CD4-positive, alpha-beta memory T cell (primary cell): ENCODE measurements at regions of chr19 and their contacts with region 1.

Region 1: DNA sequence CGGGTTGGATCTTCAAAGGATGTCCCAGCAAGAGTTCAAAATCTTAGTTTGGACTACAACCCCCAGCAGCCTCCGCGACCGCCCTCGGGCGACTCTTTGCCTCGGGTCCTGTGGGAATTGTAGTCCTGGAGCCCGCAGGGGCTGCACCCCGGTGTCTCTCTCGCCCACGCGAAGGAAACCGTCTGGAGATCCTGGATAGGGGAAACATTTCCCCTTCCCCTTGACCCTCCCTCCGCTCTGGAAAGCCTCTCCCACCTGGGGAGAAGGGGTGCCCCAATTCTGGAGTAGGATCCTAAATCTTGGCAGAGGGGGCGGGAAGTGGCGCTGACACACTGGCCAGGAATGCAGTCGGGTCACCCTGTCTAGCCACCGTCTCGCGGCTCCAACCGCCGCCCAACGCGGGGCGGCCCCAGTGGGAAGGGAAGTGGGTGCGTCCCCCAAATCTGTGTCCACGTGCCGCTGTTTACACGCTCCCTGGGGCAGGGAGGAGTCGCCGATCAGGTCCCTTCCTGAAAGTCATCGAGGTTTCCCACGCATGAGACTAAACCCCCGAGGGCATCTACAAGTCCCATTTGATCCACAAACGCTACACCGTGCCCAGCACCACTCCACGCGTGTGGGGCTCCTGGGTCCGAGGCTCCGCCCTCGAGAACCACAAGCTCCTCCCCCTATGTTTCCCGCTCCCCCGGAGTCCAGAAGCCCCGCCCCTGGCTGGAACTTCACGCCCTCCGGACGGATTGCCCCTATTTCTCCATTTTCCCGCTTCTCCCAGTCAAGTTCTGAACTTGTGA is 761 bp upstream of the PPP1R13L start:
- DNase-seq: peak; percentile 80 to 91 (median 82)
- H3K4me3 ChIP-seq: peak overlapping the region; percentile 91 to 94
- H3K4me3 Mint-ChIP-seq: peak overlapping the region; percentile 90 to 99 (median 97)
- H3K27ac ChIP-seq: peak overlapping the region; percentile 65
- H3K27ac Mint-ChIP-seq: peak overlapping the region; percentile 69 to 99 (median 96)
- H3K4me1 ChIP-seq: peaks cover 35% of the 10 kb centered on the region
- H3K4me1 Mint-ChIP-seq: peaks cover 13 to 35% (median 26%) of the 10 kb centered on the region in 4 donors
- H3K27me3 ChIP-seq: peaks cover 16% of the 10 kb centered on the region
- H3K27me3 Mint-ChIP-seq: peaks cover 12 to 22% of the 10 kb centered on the region in 2 donors

Region 2: GRCh38 chr19:44890366-44891015 is 515.1 kb before region 1 on chr19:
- CTCF ChIA-PET with region 1: no interaction called
- POLR2A ChIA-PET with region 1: no interaction called
- intact Hi-C with region 1: loop called (anchors 5 kb)
- DNase-seq: peak; percentile 100
- H3K4me3 ChIP-seq: peak overlapping the region; percentile 36 to 59
- H3K4me3 Mint-ChIP-seq: peak overlapping the region; percentile 80 to 95 (median 89)
- H3K27ac ChIP-seq: peak overlapping the region; percentile 83
- H3K27ac Mint-ChIP-seq: peak overlapping the region; percentile 83 to 97 (median 95)
- H3K4me1 ChIP-seq: peaks cover 22% of the 10 kb centered on the region
- H3K4me1 Mint-ChIP-seq: peaks cover 19 to 35% (median 28%) of the 10 kb centered on the region in 4 donors
- H3K27me3 ChIP-seq: no peaks in the 10 kb centered on the region
- H3K27me3 Mint-ChIP-seq: no peaks in the 10 kb centered on the region

Region 3: DNA sequence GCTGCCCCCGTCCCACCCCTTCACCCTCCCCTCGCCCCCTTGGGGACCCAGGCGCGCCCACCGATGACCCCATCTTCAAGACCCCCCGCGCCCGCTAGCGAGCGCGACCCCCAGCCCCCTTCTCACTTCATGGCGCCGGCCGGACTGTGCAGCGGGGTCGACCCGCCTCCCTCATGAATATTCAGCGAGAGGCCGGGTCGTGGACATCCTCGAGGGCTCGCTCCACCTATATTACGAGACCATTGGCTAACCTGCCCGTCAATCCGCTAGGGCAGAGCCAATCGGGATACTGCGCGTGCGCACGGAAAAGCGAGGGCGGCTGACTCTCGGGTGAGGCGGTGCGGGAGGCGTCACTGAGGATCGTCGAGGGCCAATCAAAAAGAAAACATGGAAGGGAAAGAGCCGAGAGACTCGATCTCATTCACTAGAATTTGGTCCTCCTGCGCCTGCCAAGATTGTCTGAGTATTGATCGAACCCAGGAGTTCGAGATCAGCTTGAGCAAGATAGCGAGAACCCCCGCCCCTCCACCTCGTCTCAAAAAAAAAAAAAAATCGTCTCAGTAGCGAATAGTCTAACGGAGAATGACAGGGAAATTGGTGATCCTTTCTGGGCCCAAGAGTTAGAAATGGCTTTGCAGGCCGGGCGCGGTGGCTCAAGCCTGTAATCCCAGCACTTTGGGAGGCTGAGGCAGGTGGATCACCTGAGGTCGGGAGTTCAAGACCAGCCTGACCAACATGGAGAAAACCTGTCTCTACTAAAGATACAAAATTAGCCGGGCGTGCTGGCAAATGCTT is 35.0 kb before region 1 on chr19 and contains the start of gene ERCC2:
- CTCF ChIA-PET with region 1: interaction called, 3 read pairs
- POLR2A ChIA-PET with region 1: no interaction called
- intact Hi-C with region 1: loop called (anchors 1 kb)
- DNase-seq: peak; percentile 99 to 100 (median 99)
- H3K4me3 ChIP-seq: peak within 1 kb of the TSS; percentile 39 to 41
- H3K4me3 Mint-ChIP-seq: peak within 1 kb of the TSS; percentile 87 to 98 (median 95)
- H3K27ac ChIP-seq: peak within 1 kb of the TSS; percentile 53
- H3K27ac Mint-ChIP-seq: peak within 1 kb of the TSS; percentile 86 to 99 (median 99)
- H3K4me1 ChIP-seq: peaks cover 6% of the 10 kb centered on the region
- H3K4me1 Mint-ChIP-seq: peaks cover 4 to 19% (median 12%) of the 10 kb centered on the region in 4 donors
- H3K27me3 ChIP-seq: no peaks in the 10 kb centered on the region
- H3K27me3 Mint-ChIP-seq: no peaks in the 10 kb centered on the region
- total RNA-seq, gene ERCC2: 17.9 to 19.3 TPM

Region 4: GRCh38 chr19:45423589-45424190 is 18.1 kb after region 1 on chr19 and contains the start of gene ERCC1:
- CTCF ChIA-PET with region 1: no interaction called
- POLR2A ChIA-PET with region 1: interaction called, 3 read pairs
- intact Hi-C with region 1: loop called (anchors 1 kb)
- DNase-seq: peak in 4 of 5 donors; percentile 67 to 87 (median 71)
- H3K4me3 ChIP-seq: peak within 1 kb of the TSS; percentile 54 to 74
- H3K4me3 Mint-ChIP-seq: peak within 1 kb of the TSS; percentile 91 to 97 (median 94)
- H3K27ac ChIP-seq: peak within 1 kb of the TSS; percentile 68
- H3K27ac Mint-ChIP-seq: peak within 1 kb of the TSS; percentile 89 to 97 (median 94)
- H3K4me1 ChIP-seq: peaks cover 36% of the 10 kb centered on the region
- H3K4me1 Mint-ChIP-seq: peaks cover 28 to 58% (median 41%) of the 10 kb centered on the region in 4 donors
- H3K27me3 ChIP-seq: no peaks in the 10 kb centered on the region
- H3K27me3 Mint-ChIP-seq: peaks cover 0 to 2% of the 10 kb centered on the region in 2 donors
- total RNA-seq, gene ERCC1: 46.6 to 46.9 TPM